Activated naive CD4-positive, alpha-beta T cell treated with anti-CD3 and anti-CD28 coated beads for 36 hours (primary cell): ENCODE measurements at regions of chr10 and their contacts with region 1.

Region 1: GRCh38 chr10:14971867-14972448 is 12.8 kb downstream of the MEIG1 start:
- DNase-seq: peak; percentile 70
- H3K4me3 Mint-ChIP-seq: no peak overlapping the region
- H3K27ac Mint-ChIP-seq: no peak overlapping the region
- H3K4me1 Mint-ChIP-seq: no peaks in the 10 kb centered on the region
- H3K27me3 Mint-ChIP-seq: peaks cover 11% of the 10 kb centered on the region

Region 2: GRCh38 chr10:14982744-14983143 is 10.8 kb after region 1 on chr10:
- CTCF ChIA-PET with region 1: interaction called, 10 read pairs
- intact Hi-C with region 1: no loop called
- DNase-seq: no peak
- H3K4me3 Mint-ChIP-seq: no peak overlapping the region
- H3K27ac Mint-ChIP-seq: no peak overlapping the region
- H3K4me1 Mint-ChIP-seq: no peaks in the 10 kb centered on the region
- H3K27me3 Mint-ChIP-seq: no peaks in the 10 kb centered on the region